HepG2 (cell line): ENCODE measurements at regions of chr5 and their contacts with region 1.

Region 1: DNA sequence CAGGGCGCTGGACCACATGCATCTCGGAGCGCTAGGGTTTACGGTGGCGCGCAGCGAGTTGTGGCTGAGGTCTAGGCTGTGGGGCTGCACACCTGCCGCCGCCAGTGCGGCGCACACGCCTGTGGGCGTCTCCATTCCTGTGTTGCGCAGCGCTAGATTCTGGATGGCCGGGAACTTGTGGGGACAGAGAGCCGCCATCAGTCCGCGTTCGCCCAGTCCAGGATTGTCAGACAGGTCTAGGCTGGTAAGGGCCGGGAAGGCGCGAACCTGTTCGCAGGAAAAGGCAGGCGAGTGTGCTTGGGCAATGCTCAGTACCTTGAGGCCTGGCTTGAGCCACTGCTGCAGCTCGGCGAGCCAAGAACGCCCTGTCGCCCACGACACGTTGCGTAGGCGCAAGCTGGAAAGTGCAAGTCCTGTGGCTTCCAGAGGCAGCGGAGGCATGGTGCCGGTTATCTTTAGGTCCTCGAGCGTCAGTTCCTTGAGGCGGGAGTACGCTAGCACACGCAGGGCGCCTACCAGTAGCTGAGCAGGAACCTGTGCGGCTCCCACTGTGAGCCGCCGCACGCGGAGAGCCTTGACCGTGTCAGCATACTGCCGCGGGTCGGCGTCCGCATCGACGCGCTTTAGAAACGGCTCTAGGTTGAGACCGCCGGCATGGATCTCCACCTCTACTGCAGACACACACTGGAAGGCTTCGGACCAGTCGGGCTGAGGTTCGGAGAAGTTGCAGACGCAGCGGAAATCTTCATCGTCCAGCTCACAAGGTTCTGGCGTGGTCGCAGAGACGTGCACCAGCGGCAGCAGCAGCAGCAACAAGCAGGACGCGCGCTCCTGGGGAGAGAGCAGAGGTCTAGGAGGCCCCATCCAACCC is 590 bp downstream of the CD14 start:
- DNase-seq: no peak
- ATAC-seq: no peak
- H3K4me3 ChIP-seq: peak overlapping the region in 2 of 3 experiments; percentile 6 to 50; a peak in 1 of 6 replicates
- H3K27ac ChIP-seq: peak overlapping the region; percentile 36
- H3K4me1 ChIP-seq: peaks cover 50% of the 10 kb centered on the region
- H3K27me3 ChIP-seq: no peaks in the 10 kb centered on the region
- CTCF ChIP-seq: no peak
- EP300 ChIP-seq: no peak
- POLR2A ChIP-seq: no peak
- RAD21 ChIP-seq: no peak

Region 2: DNA sequence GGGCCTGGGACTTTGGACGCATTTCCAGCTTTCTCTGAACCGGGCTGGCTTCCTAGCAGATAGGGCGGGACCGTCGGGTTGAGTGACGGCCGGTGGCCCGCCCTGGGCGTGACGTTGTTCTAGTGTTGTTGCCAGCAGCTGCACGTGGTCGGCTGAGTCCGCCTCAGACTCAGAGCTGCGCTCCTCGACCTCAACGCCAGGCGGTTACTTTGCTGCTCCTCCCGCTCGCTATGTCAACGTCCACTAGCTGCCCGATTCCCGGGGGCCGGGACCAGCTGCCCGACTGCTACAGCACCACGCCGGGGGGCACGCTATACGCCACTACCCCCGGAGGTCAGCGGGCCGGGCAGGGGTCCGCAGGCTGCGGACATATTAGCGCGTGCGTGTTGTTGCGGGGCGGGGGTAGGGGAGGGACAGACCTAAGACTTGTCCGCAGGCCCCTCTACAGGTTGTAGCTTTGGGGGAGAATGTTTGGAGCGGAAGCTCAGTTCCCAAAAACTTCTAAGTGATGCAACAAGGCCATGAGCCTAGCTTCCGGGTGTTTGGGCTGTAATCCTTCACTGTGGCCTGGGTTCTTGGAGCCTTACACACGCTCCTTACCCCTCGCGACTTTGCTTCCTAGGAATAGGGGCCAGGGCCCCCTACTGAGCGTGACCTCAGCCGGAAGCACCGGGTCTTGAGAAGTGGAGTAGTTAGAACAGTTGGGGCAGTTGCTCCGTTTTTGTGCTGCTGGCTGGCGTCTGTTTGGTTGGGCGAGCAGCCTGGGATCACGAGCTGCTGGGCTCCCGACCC is 84.7 kb before region 1 on chr5 and contains the start of gene EIF4EBP3:
- CTCF ChIA-PET with region 1: no interaction called
- POLR2A ChIA-PET with region 1: interaction called, 11 read pairs
- in situ Hi-C with region 1: no loop called
- intact Hi-C with region 1: no loop called
- DNase-seq: peak; percentile 94
- ATAC-seq: peak; percentile 94
- H3K4me3 ChIP-seq: peak within 1 kb of the TSS; percentile 21 to 69 (median 48); a peak in 5 of 6 replicates
- H3K27ac ChIP-seq: peak within 1 kb of the TSS; percentile 86
- H3K4me1 ChIP-seq: peaks cover 27% of the 10 kb centered on the region
- H3K27me3 ChIP-seq: no peaks in the 10 kb centered on the region
- CTCF ChIP-seq: peak; percentile 62
- EP300 ChIP-seq: no peak
- POLR2A ChIP-seq: peak; percentile 3 to 58
- RAD21 ChIP-seq: peak; percentile 73
- total RNA-seq, gene EIF4EBP3: 1.7 and 1.9 TPM in 2 replicates

Region 3: DNA sequence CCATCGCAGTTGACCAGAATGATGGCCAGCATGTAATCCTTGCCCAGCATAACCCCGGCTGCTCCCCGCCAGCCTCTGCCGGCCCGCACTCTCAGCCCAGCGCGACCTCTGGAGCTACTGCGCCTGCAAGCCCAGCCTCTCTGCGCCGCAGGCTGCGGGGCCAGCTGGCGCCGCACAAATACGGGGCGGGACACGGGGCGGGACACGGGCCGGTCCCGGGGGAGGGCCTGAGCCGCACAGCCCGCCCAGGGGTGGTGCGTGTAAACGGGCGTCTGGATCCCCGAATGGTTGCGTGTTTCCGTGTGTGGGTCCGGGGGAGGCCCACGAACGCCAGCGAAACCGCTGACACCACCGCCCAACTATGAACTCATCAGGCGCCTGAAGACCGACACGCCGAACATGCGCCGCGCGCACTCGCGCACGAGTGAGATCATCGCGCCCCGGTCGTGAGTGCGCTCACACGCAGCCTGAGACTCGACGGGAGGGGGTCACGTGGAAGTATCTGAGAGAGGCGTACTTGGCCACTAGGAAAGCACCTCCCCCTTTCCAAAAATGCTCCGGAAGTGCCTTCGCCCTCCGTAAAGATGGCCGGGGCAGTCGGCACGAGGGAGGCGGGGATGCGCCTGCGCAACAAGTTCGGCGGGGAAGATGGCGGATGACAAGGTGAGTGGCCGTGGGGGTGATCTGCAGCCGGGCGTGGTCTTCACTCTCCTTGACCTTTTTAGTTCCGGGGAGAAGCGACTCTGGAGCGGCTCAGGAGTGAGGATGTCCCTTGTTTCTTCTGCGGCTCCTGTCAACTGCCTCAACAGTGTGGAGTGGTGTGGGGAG is 68.0 kb before region 1 on chr5 and contains the starts of genes APBB3 and SLC35A4:
- CTCF ChIA-PET with region 1: no interaction called
- POLR2A ChIA-PET with region 1: no interaction called
- in situ Hi-C with region 1: loop called (anchors 5 kb)
- intact Hi-C with region 1: no loop called
- DNase-seq: peak; percentile 27
- ATAC-seq: peak; percentile 88
- H3K4me3 ChIP-seq: peak within 1 kb of the TSS; percentile 43 to 70 (median 46)
- H3K27ac ChIP-seq: no peak within 1 kb of the TSS
- H3K4me1 ChIP-seq: peaks cover 18% of the 10 kb centered on the region
- H3K27me3 ChIP-seq: peaks cover 0 to 5% of the 10 kb centered on the region in 2 experiments; a peak in 1 of 5 replicates
- CTCF ChIP-seq: peak; percentile 22; the same call in 1 of the 2 replicates
- EP300 ChIP-seq: no peak
- POLR2A ChIP-seq: 0 out of 4 replicates have a peak, but pooled peaks have one; percentile 11 to 24
- RAD21 ChIP-seq: no peak
- total RNA-seq, gene APBB3: 0.22 and 0.38 TPM in 2 replicates
- total RNA-seq, gene SLC35A4: 0.71 and 0.95 TPM in 2 replicates

Region 4: DNA sequence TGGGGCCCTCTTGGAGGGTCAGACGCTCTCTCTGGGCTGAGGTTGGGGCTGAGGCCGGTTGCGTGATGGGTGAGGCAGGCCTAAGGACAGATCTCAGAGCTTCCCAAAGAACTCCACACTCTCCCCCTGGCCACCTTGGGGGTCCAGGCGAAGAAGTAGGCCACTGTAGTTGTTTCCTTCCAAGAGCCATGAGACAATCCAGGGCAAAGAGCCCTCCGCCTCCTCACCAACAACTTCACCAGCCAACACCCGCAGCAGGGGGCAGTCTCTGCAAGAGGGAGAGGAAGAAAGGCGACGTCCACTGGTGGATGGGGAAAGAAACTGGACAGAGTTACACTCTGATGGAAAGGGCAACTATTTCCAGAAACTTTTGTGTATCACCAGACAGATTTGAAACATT is 57.1 kb before region 1 on chr5:
- CTCF ChIA-PET with region 1: interaction called, 11 read pairs
- POLR2A ChIA-PET with region 1: interaction called, 5 read pairs
- in situ Hi-C with region 1: no loop called
- intact Hi-C with region 1: loop called (anchors 1 kb)
- DNase-seq: peak; percentile 76
- ATAC-seq: peak; percentile 92
- H3K4me3 ChIP-seq: peak overlapping the region; percentile 17 to 57 (median 40); a peak in 4 of 6 replicates
- H3K27ac ChIP-seq: no peak overlapping the region
- H3K4me1 ChIP-seq: peaks cover 45% of the 10 kb centered on the region
- H3K27me3 ChIP-seq: no peaks in the 10 kb centered on the region
- CTCF ChIP-seq: peak; percentile 92
- EP300 ChIP-seq: no peak
- POLR2A ChIP-seq: no peak
- RAD21 ChIP-seq: peak; percentile 87

Region 5: GRCh38 chr5:140609126-140609525 is 23.3 kb before region 1 on chr5:
- CTCF ChIA-PET with region 1: no interaction called
- POLR2A ChIA-PET with region 1: interaction called, 3 read pairs
- in situ Hi-C with region 1: no loop called
- intact Hi-C with region 1: loop called (anchors 1 kb)
- DNase-seq: no peak
- ATAC-seq: no peak
- H3K4me3 ChIP-seq: no peak overlapping the region
- H3K27ac ChIP-seq: no peak overlapping the region
- H3K4me1 ChIP-seq: peaks cover 73% of the 10 kb centered on the region
- H3K27me3 ChIP-seq: no peaks in the 10 kb centered on the region
- CTCF ChIP-seq: no peak
- EP300 ChIP-seq: no peak
- POLR2A ChIP-seq: no peak
- RAD21 ChIP-seq: no peak

Region 6: DNA sequence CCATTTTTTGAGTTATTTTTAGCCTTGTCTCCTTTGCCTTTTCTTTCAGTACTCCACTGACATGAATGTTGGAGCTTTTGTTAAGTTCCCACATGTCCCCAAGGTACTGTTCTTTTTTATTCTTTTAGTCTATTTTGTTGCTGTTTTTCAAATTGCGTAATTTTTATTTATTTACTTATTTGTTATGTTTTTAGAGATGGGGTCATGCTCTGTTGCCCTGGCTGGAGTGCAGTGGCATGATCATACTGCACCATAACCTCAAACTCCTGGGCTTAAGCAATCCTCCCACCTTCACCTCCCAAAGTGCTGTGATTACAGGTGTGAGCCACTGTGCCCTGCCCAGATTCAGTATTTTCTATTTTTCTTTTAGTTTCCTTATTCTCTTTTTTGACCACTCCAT is 148.1 kb after region 1 on chr5:
- CTCF ChIA-PET with region 1: no interaction called
- POLR2A ChIA-PET with region 1: no interaction called
- in situ Hi-C with region 1: no loop called
- intact Hi-C with region 1: no loop called
- DNase-seq: no peak
- ATAC-seq: no peak
- H3K4me3 ChIP-seq: no peak overlapping the region
- H3K27ac ChIP-seq: no peak overlapping the region
- H3K4me1 ChIP-seq: no peaks in the 10 kb centered on the region
- H3K27me3 ChIP-seq: no peaks in the 10 kb centered on the region
- CTCF ChIP-seq: no peak
- EP300 ChIP-seq: no peak
- POLR2A ChIP-seq: no peak
- RAD21 ChIP-seq: no peak